A673 (cell line): ENCODE measurements at regions of chr12 and their contacts with region 1.

Region 1: GRCh38 chr12:122021822-122022526 is at the start of gene BCL7A:
- DNase-seq: peak; percentile 88
- H3K4me3 ChIP-seq: peak within 1 kb of the TSS; percentile 86
- H3K27ac ChIP-seq: peak within 1 kb of the TSS; percentile 85
- H3K4me1 ChIP-seq: peaks cover 12% of the 10 kb centered on the region
- H3K27me3 ChIP-seq: no peaks in the 10 kb centered on the region
- CTCF ChIP-seq: no peak
- total RNA-seq, gene BCL7A: 40.7 and 41.8 TPM in 2 replicates

Region 2: GRCh38 chr12:121925358-121925695 is 96.6 kb before region 1 on chr12:
- CTCF ChIA-PET with region 1: no interaction called
- POLR2A ChIA-PET with region 1: no interaction called
- intact Hi-C with region 1: loop called (anchors 2 kb)
- DNase-seq: peak; percentile 63
- H3K4me3 ChIP-seq: no peak overlapping the region
- H3K27ac ChIP-seq: peak overlapping the region; percentile 88
- H3K4me1 ChIP-seq: peaks cover 29% of the 10 kb centered on the region
- H3K27me3 ChIP-seq: no peaks in the 10 kb centered on the region
- CTCF ChIP-seq: no peak

Region 3: DNA sequence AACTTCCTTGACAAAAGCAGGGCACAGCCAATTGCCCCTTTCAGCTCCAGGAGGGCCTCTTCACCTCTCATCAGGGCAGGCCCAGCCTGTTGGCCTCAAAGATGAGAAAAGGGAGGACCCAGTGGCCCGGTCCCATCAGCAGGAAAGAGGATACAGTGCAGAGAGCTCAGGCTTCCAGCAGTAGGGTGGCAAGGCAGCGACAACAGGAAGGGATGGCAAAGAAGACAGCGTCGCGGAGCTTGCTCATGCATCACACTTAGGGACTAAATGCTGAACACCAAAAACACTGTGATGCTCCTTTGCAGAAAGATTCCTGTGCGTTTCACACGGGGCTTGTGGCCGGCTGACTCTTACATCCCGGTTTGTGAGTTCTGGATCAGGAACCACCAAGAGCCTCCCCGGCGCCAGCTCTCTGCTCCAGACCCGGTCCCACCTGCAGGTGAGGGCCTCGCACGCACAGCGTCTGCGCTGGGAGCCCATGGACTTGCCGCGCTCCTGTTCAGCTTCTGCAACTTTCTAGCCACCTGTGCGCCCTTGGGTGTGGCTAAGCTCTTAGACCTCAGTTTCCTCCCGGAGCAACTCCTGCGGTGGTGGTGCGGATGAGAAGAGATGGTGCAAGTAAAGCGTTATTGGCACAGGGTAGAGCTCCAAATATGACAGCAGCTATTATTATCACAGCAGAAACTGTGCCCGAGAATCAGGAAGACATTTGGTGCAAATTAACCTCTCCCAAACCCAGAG is 15.6 kb before region 1 on chr12:
- CTCF ChIA-PET with region 1: no interaction called
- POLR2A ChIA-PET with region 1: interaction called, 12 read pairs
- intact Hi-C with region 1: no loop called
- DNase-seq: no peak
- H3K4me3 ChIP-seq: no peak overlapping the region
- H3K27ac ChIP-seq: no peak overlapping the region
- H3K4me1 ChIP-seq: no peaks in the 10 kb centered on the region
- H3K27me3 ChIP-seq: no peaks in the 10 kb centered on the region
- CTCF ChIP-seq: no peak

Region 4: GRCh38 chr12:122421821-122422729 is 400.1 kb after region 1 on chr12 and contains the start of gene CLIP1:
- CTCF ChIA-PET with region 1: no interaction called
- POLR2A ChIA-PET with region 1: no interaction called
- intact Hi-C with region 1: no loop called
- DNase-seq: peak; percentile 76
- H3K4me3 ChIP-seq: peak within 1 kb of the TSS; percentile 87
- H3K27ac ChIP-seq: peak within 1 kb of the TSS; percentile 96
- H3K4me1 ChIP-seq: peaks cover 17% of the 10 kb centered on the region
- H3K27me3 ChIP-seq: no peaks in the 10 kb centered on the region
- CTCF ChIP-seq: peak; percentile 56
- total RNA-seq, gene CLIP1: 52.1 and 62.2 TPM in 2 replicates